CD4-positive, alpha-beta memory T cell (primary cell): ENCODE measurements at regions of chr12 and their contacts with region 1.

Region 1: GRCh38 chr12:57250541-57251324 is at the start of gene STAC3:
- DNase-seq: no peak
- H3K4me3 ChIP-seq: no peak within 1 kb of the TSS
- H3K4me3 Mint-ChIP-seq: no peak within 1 kb of the TSS
- H3K27ac ChIP-seq: no peak within 1 kb of the TSS
- H3K27ac Mint-ChIP-seq: peak within 1 kb of the TSS in 1 of 7 donors; percentile 29
- H3K4me1 ChIP-seq: no peaks in the 10 kb centered on the region
- H3K4me1 Mint-ChIP-seq: no peaks in the 10 kb centered on the region
- H3K27me3 ChIP-seq: no peaks in the 10 kb centered on the region
- H3K27me3 Mint-ChIP-seq: peaks cover 3% of the 10 kb centered on the region in 2 donors
- total RNA-seq, gene STAC3: 2.7 to 3.0 TPM

Region 2: GRCh38 chr12:57127710-57128533 is 122.8 kb before region 1 on chr12 and contains the start of gene LRP1:
- CTCF ChIA-PET with region 1: no interaction called
- POLR2A ChIA-PET with region 1: no interaction called
- intact Hi-C with region 1: no loop called
- DNase-seq: peak; percentile 73 to 83 (median 77)
- H3K4me3 ChIP-seq: peak within 1 kb of the TSS; percentile 61 to 77
- H3K4me3 Mint-ChIP-seq: peak within 1 kb of the TSS; percentile 84 to 92 (median 90)
- H3K27ac ChIP-seq: peak within 1 kb of the TSS; percentile 59
- H3K27ac Mint-ChIP-seq: peak within 1 kb of the TSS; percentile 43 to 91 (median 89)
- H3K4me1 ChIP-seq: peaks cover 8% of the 10 kb centered on the region
- H3K4me1 Mint-ChIP-seq: peaks cover 8 to 30% (median 14%) of the 10 kb centered on the region in 4 donors
- H3K27me3 ChIP-seq: no peaks in the 10 kb centered on the region
- H3K27me3 Mint-ChIP-seq: no peaks in the 10 kb centered on the region
- total RNA-seq, gene LRP1: 9.7 to 11.6 TPM

Region 3: GRCh38 chr12:57238854-57239554 is 11.7 kb before region 1 on chr12:
- CTCF ChIA-PET with region 1: interaction called, 34 read pairs
- POLR2A ChIA-PET with region 1: interaction called, 3 read pairs
- intact Hi-C with region 1: no loop called
- DNase-seq: peak; percentile 80 to 87 (median 82)
- H3K4me3 ChIP-seq: peak overlapping the region; percentile 42 to 79
- H3K4me3 Mint-ChIP-seq: peak overlapping the region; percentile 90 to 98 (median 94)
- H3K27ac ChIP-seq: no peak overlapping the region
- H3K27ac Mint-ChIP-seq: peak overlapping the region in 6 of 7 donors; percentile 7 to 85 (median 62)
- H3K4me1 ChIP-seq: peaks cover 87% of the 10 kb centered on the region
- H3K4me1 Mint-ChIP-seq: peaks cover 41 to 88% (median 60%) of the 10 kb centered on the region in 4 donors
- H3K27me3 ChIP-seq: peaks cover 43% of the 10 kb centered on the region
- H3K27me3 Mint-ChIP-seq: peaks cover 32 to 52% of the 10 kb centered on the region in 2 donors